ENCODE measurements at regions of chr2 and their contacts with region 1.

Region 1: DNA sequence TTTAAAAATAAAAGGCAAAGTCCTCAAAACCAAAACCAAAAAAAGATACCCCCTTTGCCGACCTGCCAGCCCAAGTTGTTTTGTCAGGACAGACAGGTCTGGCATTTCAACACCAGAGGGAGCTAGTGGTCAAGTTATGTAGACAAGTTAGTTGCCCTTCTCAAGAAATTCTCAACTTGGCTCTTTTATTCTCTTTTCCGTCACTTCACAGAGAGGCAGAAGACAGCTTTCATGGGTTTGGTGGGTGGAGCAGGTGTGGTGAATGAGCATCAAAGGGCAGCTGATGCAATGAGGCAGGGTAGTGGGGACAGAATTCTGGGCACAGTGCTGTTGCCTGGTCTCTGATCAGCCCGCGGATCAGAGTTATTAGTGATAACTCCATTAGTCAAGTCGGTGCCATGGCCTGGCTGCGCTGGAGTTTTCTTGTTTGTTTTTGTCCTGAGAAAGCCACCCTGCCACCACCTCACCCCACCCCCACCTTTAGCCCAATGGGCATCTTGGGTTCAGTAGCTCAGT is 303.7 kb upstream of the EPAS1 start:
- DNase-seq: peak; percentile 78
- ATAC-seq: peak; percentile 56
- H3K4me3 ChIP-seq: peak overlapping the region in 2 of 3 experiments; percentile 13 to 59; a peak in 3 of 6 replicates
- H3K27ac ChIP-seq: peak overlapping the region; percentile 72
- H3K4me1 ChIP-seq: peaks cover 36% of the 10 kb centered on the region
- H3K27me3 ChIP-seq: no peaks in the 10 kb centered on the region
- CTCF ChIP-seq: peak; percentile 87
- EP300 ChIP-seq: peak in 1 of 2 experiments; percentile 15; a peak in 1 of 4 replicates
- POLR2A ChIP-seq: no peak
- RAD21 ChIP-seq: peak; percentile 76

Region 2: DNA sequence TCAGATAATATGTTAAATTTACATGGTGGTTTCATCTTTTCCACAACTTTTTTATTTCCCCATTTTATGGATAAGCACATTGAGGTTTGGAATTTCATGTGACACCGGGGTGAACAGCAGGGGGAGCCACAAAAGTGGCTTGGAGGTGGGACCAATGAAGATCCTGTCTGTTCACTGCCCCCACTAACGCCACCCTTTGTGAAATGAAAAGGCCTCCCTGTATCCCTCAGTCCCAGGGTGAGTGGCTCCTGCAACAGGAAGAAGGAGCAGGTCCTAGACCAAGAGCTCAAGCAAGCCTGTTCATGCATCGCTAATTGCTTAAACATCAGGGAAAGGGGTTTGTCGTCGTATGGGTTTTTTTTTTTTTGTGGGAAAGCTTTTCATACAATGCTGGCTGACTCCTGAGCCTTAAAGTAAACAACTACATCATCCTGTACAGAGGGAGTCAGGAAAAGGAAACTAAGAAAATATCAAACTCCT is 35.8 kb after region 1 on chr2:
- CTCF ChIA-PET with region 1: no interaction called
- POLR2A ChIA-PET with region 1: no interaction called
- in situ Hi-C with region 1: no loop called
- intact Hi-C with region 1: no loop called
- DNase-seq: peak; percentile 46
- ATAC-seq: peak; percentile 39; the same call in 1 of the 3 replicates
- H3K4me3 ChIP-seq: no peak overlapping the region
- H3K27ac ChIP-seq: no peak overlapping the region
- H3K4me1 ChIP-seq: peaks cover 30% of the 10 kb centered on the region
- H3K27me3 ChIP-seq: no peaks in the 10 kb centered on the region
- CTCF ChIP-seq: peak; percentile 34
- EP300 ChIP-seq: no peak
- POLR2A ChIP-seq: no peak
- RAD21 ChIP-seq: no peak

Region 3: DNA sequence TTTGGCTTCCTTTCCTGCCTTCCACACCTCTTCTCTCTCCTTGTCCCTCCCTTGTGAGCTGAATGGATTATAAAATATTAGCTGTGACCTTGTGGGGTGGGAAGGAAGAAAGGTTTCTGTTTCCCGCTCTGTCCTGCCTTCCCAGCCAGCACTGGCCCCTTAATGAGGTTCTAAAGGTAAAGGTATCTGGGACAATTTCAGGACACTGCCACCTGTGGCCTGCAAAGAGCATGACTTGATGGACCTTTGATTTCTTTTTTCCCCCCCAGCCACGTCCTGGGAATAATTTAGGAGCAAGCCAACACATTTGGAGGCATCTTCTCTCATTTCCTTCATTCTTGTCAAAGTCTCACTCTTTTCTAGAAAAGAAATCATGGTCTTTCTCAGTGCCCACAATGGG is 57.0 kb after region 1 on chr2:
- CTCF ChIA-PET with region 1: no interaction called
- POLR2A ChIA-PET with region 1: no interaction called
- in situ Hi-C with region 1: no loop called
- intact Hi-C with region 1: loop called (anchors 5 kb)
- DNase-seq: peak; percentile 36
- ATAC-seq: peak; percentile 87
- H3K4me3 ChIP-seq: no peak overlapping the region
- H3K27ac ChIP-seq: no peak overlapping the region
- H3K4me1 ChIP-seq: no peaks in the 10 kb centered on the region; the same call in 1 of the 2 replicates
- H3K27me3 ChIP-seq: no peaks in the 10 kb centered on the region
- CTCF ChIP-seq: peak; percentile 32
- EP300 ChIP-seq: no peak
- POLR2A ChIP-seq: no peak
- RAD21 ChIP-seq: no peak

Measured in HepG2 (cell line).